Panc1 (cell line): ENCODE measurements at regions of chr6 and their contacts with region 1.

Region 1: DNA sequence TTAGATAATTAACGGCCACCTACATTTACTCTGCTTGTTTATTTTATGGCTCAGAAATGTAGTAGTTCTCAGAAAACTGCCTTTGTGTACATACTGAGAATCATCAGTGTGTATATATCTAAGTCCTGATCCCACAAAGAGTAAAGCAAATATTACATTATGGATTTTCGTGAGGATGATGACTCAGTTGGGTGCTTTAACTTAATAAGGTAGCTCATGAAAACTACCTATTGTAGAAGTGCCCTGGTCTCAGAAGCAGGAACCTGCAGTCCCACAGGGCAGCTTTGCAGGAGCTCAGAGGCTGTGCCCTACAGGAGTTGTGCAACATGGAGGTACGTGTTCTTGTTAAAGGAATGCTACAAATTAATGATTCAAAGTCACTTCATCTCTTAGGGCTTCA is 108.2 kb downstream of the PLG start:
- DNase-seq: peak; percentile 94
- ATAC-seq: peak; percentile 99
- H3K4me3 ChIP-seq: peak overlapping the region in 1 of 2 experiments; percentile 31; a peak in 2 of 4 replicates
- H3K27ac ChIP-seq: peak overlapping the region; percentile 81
- H3K4me1 ChIP-seq: peaks cover 9% of the 10 kb centered on the region
- H3K27me3 ChIP-seq: no peaks in the 10 kb centered on the region
- CTCF ChIP-seq: no peak

Region 2: GRCh38 chr6:160634706-160635105 is 175.5 kb before region 1 on chr6:
- CTCF ChIA-PET with region 1: no interaction called
- POLR2A ChIA-PET with region 1: no interaction called
- in situ Hi-C with region 1: no loop called
- intact Hi-C with region 1: no loop called
- DNase-seq: no peak
- ATAC-seq: no peak
- H3K4me3 ChIP-seq: no peak overlapping the region
- H3K27ac ChIP-seq: no peak overlapping the region
- H3K4me1 ChIP-seq: no peaks in the 10 kb centered on the region
- H3K27me3 ChIP-seq: no peaks in the 10 kb centered on the region
- CTCF ChIP-seq: no peak

Region 3: DNA sequence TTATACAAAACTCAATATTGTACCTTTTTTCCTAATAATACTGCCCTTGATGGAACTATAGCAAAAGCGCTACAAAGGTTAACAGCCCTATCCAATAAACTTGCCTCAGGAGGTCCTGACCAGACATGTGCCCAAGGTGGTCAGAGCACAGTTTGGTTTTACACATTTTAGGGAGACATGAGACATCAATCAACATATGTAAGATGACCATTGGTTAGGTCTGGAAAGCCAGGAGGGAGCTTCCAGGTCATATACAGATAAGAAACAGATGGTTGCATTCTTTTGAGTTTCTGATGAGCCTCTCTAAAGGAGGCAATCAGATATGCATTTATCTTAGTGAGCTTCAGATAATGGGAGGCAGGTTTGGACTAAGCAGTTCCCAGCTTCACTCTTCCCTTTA is 16.6 kb before region 1 on chr6:
- CTCF ChIA-PET with region 1: no interaction called
- POLR2A ChIA-PET with region 1: interaction called, 13 read pairs
- in situ Hi-C with region 1: no loop called
- intact Hi-C with region 1: no loop called
- DNase-seq: no peak
- ATAC-seq: no peak
- H3K4me3 ChIP-seq: no peak overlapping the region
- H3K27ac ChIP-seq: peak overlapping the region; percentile 68; the same call in 1 of the 2 replicates
- H3K4me1 ChIP-seq: peaks cover 10% of the 10 kb centered on the region
- H3K27me3 ChIP-seq: no peaks in the 10 kb centered on the region
- CTCF ChIP-seq: no peak